ENCODE measurements at regions of chr4 and their contacts with region 1.

Region 1: DNA sequence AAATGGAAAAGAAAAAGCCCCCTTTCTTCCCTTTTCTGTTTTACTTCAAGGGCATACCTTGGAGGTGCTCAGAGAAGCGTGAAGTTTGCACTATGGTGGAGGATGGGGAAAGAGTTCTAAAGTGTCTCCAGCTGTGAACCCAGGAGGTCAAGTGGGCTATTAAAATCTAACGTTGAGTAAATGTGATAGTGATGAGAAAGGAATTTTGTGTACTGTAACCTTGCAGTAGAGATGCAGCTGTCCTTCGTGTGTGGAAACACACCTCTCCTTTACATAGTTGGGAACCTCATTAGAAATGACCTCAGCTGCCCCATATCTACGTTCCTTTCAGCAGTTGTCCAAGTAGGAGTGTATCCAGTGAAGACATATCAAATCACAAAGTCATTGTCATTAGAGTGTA is 26.5 kb downstream of the ADH5 start:
- DNase-seq: no peak
- H3K4me3 ChIP-seq: no peak overlapping the region
- H3K27ac ChIP-seq: no peak overlapping the region
- H3K4me1 ChIP-seq: peaks cover 24% of the 10 kb centered on the region
- H3K27me3 ChIP-seq: no peaks in the 10 kb centered on the region
- CTCF ChIP-seq: no peak

Region 2: GRCh38 chr4:98363431-98363830 is 698.7 kb before region 1 on chr4:
- CTCF ChIA-PET with region 1: no interaction called
- dilution Hi-C with region 1: no loop called
- in situ Hi-C with region 1: no loop called
- intact Hi-C with region 1: no loop called
- DNase-seq: peak; percentile 49
- H3K4me3 ChIP-seq: no peak overlapping the region
- H3K27ac ChIP-seq: peak overlapping the region; percentile 4
- H3K4me1 ChIP-seq: peaks cover 9% of the 10 kb centered on the region
- H3K27me3 ChIP-seq: no peaks in the 10 kb centered on the region
- CTCF ChIP-seq: no peak

Region 3: DNA sequence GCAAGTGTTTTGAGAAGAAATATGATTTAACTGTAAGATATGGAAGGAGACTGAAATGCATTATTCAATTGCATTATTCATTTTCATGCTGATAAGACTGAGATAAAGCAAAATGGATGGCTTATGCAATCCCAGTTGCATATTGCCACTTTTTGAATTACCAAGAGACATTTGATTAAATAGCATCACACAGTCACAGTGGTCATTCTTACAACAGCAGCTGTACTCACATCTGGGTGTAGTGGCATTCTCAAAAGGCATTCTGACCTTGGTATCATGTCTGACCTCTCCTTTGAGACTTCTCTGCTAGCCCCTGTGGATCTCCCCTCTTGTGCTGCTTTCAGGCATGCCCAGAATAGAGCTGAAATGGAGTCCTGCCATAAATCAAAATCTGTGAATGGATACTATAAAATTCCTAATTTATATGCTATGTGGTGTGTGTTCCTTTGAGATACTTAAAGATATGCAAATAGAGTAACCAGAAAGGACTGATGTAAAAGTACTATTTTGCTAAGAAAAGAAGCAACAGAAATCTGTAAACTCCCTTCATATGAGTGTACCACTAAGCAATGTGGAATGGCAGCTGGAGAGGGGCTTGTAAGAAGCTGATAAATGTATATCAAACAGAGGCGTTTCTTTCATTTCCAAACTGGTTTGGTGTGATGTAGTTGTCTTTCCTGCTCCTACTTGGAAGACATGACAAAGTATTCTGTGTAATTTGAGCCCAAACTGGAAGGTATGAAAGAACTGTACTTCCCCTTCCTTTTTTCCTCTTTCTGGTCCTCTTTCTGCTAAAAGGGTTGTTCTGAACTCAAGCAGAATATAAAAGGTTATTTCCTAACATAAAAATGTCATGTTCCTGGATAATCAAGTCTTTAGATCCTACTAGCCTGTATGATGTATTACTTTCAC is 92.0 kb before region 1 on chr4:
- CTCF ChIA-PET with region 1: no interaction called
- dilution Hi-C with region 1: no loop called
- in situ Hi-C with region 1: no loop called
- intact Hi-C with region 1: no loop called
- DNase-seq: no peak
- H3K4me3 ChIP-seq: no peak overlapping the region
- H3K27ac ChIP-seq: no peak overlapping the region
- H3K4me1 ChIP-seq: peaks cover 2% of the 10 kb centered on the region
- H3K27me3 ChIP-seq: no peaks in the 10 kb centered on the region
- CTCF ChIP-seq: no peak

Region 4: GRCh38 chr4:99159699-99160098 is 97.6 kb after region 1 on chr4:
- CTCF ChIA-PET with region 1: interaction called, 20 read pairs
- dilution Hi-C with region 1: no loop called
- in situ Hi-C with region 1: no loop called
- intact Hi-C with region 1: no loop called
- DNase-seq: no peak
- H3K4me3 ChIP-seq: no peak overlapping the region
- H3K27ac ChIP-seq: no peak overlapping the region
- H3K4me1 ChIP-seq: no peaks in the 10 kb centered on the region
- H3K27me3 ChIP-seq: no peaks in the 10 kb centered on the region
- CTCF ChIP-seq: peak; percentile 21 to 34

Region 5: DNA sequence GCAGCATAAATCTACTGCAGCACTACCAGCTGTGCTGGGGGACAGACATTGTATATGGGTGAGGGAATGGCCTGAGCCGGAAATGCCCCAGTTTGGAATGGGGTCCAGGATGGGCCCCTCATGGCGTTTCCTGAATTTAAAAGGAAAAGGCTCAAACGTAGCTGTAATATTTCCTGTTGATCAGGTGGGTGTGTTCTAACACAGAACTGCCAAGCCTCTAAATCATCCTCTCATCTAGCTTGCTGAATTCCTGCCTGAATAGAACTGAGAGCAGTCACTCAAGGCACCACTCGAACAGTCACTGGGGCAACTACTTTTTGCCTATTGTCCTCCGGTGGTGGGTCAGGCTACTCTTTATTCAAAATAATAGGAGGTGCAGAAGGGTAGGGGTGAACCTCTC is 128.2 kb after region 1 on chr4:
- CTCF ChIA-PET with region 1: no interaction called
- dilution Hi-C with region 1: no loop called
- in situ Hi-C with region 1: no loop called
- intact Hi-C with region 1: no loop called
- DNase-seq: no peak
- H3K4me3 ChIP-seq: no peak overlapping the region
- H3K27ac ChIP-seq: no peak overlapping the region
- H3K4me1 ChIP-seq: no peaks in the 10 kb centered on the region
- H3K27me3 ChIP-seq: no peaks in the 10 kb centered on the region
- CTCF ChIP-seq: no peak

Measured in mammary epithelial cell (primary cell).